ENCODE measurements at regions of chr2 and their contacts with region 1.

Region 1: GRCh38 chr2:221810245-221810644 is 238.1 kb upstream of the EPHA4 start:
- DNase-seq: no peak
- H3K4me3 ChIP-seq: no peak overlapping the region
- CTCF ChIP-seq: no peak
- POLR2A ChIP-seq: no peak

Region 2: DNA sequence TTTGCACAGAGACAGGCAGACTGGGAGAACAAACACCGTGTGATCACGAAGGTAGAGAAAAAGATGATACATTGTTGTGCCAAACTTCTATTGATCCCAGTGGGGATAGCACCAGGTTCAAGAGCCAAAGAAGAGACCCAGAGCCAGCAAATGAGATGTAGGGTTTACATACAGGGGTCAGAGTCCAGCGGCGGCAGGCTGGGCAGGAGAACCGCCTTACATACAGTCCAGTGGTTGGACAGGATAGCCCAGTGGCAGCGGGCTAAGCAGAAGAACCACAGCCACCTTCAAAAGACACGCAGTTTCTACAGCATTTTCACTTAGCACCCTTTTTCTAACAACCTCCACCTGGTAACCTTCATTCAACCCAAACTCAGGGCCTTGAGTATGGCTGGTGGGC is 1250.1 kb before region 1 on chr2:
- intact Hi-C with region 1: loop called (anchors 5 kb)
- DNase-seq: no peak
- H3K4me3 ChIP-seq: no peak overlapping the region
- CTCF ChIP-seq: no peak
- POLR2A ChIP-seq: no peak

Region 3: DNA sequence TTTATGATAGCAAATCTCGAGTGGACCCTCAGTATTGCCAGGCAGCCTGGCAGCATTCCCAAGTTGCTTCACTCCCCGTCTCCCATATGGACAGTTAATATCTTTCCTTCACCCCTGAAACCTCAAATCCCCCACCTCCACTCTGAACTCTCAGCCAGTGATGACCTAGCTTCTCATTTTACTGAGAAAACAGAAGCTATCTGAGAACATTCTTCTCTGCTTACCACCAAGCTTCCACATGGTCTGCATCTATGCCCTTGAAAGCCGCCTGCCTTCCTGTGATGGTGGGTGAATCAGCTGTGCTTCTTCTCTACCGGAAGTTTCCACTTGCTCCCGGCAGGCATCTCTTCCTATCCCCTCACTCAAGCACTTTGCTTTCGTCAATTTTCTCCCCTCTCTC is 767.3 kb before region 1 on chr2:
- intact Hi-C with region 1: no loop called
- DNase-seq: no peak
- H3K4me3 ChIP-seq: no peak overlapping the region
- CTCF ChIP-seq: no peak
- POLR2A ChIP-seq: no peak

Region 4: GRCh38 chr2:221844212-221845028 is 34.2 kb after region 1 on chr2:
- intact Hi-C with region 1: no loop called
- DNase-seq: no peak
- H3K4me3 ChIP-seq: no peak overlapping the region
- CTCF ChIP-seq: no peak
- POLR2A ChIP-seq: no peak